Lower leg skin (tissue), 4 donors: ENCODE measurements at regions of chr7 and their contacts with region 1.

Region 1: DNA sequence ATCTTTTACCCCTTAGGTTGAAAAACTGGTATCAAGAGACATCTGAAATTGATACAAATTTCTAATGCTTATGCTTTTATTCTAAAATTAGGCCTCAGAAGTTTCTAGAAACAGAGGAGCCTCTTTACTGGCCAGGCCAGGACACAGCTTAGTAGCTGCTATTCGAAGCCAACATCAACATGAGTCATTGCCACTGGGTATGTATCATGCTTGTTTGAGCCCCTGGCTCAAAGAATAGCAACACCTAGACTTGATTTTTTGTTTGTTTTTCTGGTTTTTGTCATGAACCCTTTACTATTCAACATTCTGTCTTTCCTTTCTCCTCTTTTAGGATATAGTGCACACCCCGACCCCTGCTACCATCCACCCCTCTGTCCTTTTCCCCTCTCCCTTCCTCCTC is 90.9 kb upstream of the STK17A start:
- DNase-seq: no peak
- H3K4me3 ChIP-seq: no peak overlapping the region
- CTCF ChIP-seq: no peak
- POLR2A ChIP-seq: no peak

Region 2: DNA sequence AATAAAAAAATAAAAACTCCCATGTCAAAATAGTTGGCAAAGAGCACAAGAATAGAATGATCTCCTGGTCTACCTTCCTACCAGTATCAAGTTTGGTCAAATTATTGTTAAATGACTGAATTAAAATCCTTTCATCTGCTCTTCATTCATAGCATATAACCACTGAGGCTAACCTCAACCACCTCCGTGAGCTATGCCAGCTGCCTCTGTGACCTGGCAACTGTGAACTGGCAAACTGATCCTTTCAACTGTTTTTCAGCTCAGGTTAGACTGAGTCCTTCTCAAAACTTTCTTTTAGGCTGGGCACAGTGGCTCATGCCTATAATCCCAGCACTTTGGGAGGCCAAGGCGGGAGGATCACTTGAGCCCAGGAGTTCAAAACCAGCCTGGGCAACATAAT is 962.4 kb after region 1 on chr7:
- intact Hi-C with region 1: loop called (anchors 10 kb)
- DNase-seq: no peak
- H3K4me3 ChIP-seq: no peak overlapping the region
- CTCF ChIP-seq: no peak
- POLR2A ChIP-seq: no peak